ENCODE measurements at regions of chr21 and their contacts with region 1.

Region 1: GRCh38 chr21:33199516-33200217 is 30.1 kb upstream of the IFNAR2 start:
- DNase-seq: peak; percentile 90
- ATAC-seq: peak; percentile 88
- H3K4me3 Mint-ChIP-seq: no peak overlapping the region
- H3K27ac Mint-ChIP-seq: no peak overlapping the region
- H3K4me1 Mint-ChIP-seq: peaks cover 35% of the 10 kb centered on the region
- H3K27me3 Mint-ChIP-seq: peaks cover 8% of the 10 kb centered on the region

Region 2: GRCh38 chr21:32994305-32994704 is 205.4 kb before region 1 on chr21:
- CTCF ChIA-PET with region 1: interaction called, 35 read pairs
- POLR2A ChIA-PET with region 1: no interaction called
- DNase-seq: no peak
- ATAC-seq: no peak
- H3K4me3 Mint-ChIP-seq: no peak overlapping the region
- H3K27ac Mint-ChIP-seq: no peak overlapping the region
- H3K4me1 Mint-ChIP-seq: no peaks in the 10 kb centered on the region
- H3K27me3 Mint-ChIP-seq: peaks cover 45% of the 10 kb centered on the region

Region 3: DNA sequence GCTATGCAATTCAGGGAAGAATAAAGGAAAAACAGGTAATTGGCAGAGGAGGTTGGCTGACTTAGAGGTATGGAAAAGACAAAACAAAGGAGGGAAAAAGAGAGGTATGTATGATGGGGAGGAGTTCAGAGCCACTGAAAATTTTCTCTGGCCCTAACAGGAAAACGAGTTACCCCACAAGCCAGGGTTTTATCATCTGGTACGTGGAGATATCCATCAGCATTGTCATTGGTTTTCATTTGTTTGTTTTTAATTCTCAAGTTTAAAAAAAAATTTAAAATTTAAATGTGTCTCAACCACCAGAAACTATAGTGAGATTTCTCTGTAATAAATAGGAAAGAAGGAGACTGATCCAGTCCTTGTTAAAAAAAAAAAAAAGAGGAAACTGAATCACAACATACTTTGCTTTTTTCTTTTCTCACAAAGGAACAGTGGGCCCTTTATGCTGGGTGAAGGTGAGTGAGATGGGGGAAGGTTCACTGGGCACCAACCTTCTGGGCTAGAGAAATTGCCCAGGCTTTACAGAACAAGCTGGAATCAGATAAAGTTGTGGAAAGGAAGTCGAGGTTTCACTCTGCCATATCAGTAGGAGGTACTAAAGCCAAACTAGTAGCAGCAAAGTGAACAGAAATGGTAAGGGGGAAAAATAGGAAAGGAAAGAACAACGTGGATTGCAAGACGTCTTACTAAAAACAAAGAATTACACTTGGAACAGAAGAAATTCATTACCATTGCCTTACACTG is 32.8 kb after region 1 on chr21:
- CTCF ChIA-PET with region 1: interaction called, 11 read pairs
- POLR2A ChIA-PET with region 1: interaction called, 4 read pairs
- DNase-seq: no peak
- ATAC-seq: no peak
- H3K4me3 Mint-ChIP-seq: peak overlapping the region; percentile 79
- H3K27ac Mint-ChIP-seq: peak overlapping the region; percentile 78
- H3K4me1 Mint-ChIP-seq: peaks cover 54% of the 10 kb centered on the region
- H3K27me3 Mint-ChIP-seq: no peaks in the 10 kb centered on the region

Region 4: GRCh38 chr21:33324291-33325221 is 124.9 kb after region 1 on chr21 and contains the start of gene IFNAR1:
- CTCF ChIA-PET with region 1: interaction called, 18 read pairs
- POLR2A ChIA-PET with region 1: no interaction called
- DNase-seq: peak; percentile 100
- ATAC-seq: peak; percentile 96
- H3K4me3 Mint-ChIP-seq: no peak within 1 kb of the TSS
- H3K27ac Mint-ChIP-seq: no peak within 1 kb of the TSS
- H3K4me1 Mint-ChIP-seq: peaks cover 25% of the 10 kb centered on the region
- H3K27me3 Mint-ChIP-seq: peaks cover 2% of the 10 kb centered on the region
- total RNA-seq, gene IFNAR1: 32.5 to 35.4 TPM

Region 5: DNA sequence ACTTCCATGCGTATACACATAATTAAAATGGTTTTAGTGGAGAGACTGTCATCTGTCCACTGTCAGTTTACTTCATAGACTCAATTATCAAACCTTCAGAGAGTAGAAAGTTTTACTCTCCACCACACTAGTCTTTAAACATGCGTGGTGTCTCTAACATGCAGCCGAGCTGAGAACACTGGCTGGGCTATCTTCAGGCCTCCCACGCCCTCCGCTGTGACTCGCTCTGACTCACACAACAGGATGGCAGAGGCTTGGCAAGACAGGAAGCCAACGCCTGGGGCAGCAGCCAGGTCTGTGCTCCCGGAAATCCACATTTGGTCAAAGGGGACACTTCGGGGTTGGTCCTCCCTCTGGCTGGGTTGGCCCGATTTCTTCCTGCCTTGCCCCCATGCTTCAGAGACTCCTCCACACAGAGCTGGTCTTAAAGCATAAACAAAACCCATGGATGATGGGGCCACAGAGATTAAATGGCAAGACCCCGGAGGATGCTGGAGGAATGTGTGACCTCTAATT is 180.9 kb after region 1 on chr21:
- CTCF ChIA-PET with region 1: interaction called, 21 read pairs
- POLR2A ChIA-PET with region 1: no interaction called
- DNase-seq: peak; percentile 89
- ATAC-seq: peak; percentile 79
- H3K4me3 Mint-ChIP-seq: peak overlapping the region; percentile 6
- H3K27ac Mint-ChIP-seq: peak overlapping the region; percentile 81
- H3K4me1 Mint-ChIP-seq: peaks cover 69% of the 10 kb centered on the region
- H3K27me3 Mint-ChIP-seq: peaks cover 23% of the 10 kb centered on the region

Region 6: GRCh38 chr21:33444499-33444898 is 244.8 kb after region 1 on chr21:
- CTCF ChIA-PET with region 1: interaction called, 65 read pairs
- POLR2A ChIA-PET with region 1: no interaction called
- DNase-seq: no peak
- ATAC-seq: no peak
- H3K4me3 Mint-ChIP-seq: no peak overlapping the region
- H3K27ac Mint-ChIP-seq: no peak overlapping the region
- H3K4me1 Mint-ChIP-seq: peaks cover 5% of the 10 kb centered on the region
- H3K27me3 Mint-ChIP-seq: no peaks in the 10 kb centered on the region